Breast epithelium (tissue), 4 donors: ENCODE measurements at regions of chr12 and their contacts with region 1.

Region 1: DNA sequence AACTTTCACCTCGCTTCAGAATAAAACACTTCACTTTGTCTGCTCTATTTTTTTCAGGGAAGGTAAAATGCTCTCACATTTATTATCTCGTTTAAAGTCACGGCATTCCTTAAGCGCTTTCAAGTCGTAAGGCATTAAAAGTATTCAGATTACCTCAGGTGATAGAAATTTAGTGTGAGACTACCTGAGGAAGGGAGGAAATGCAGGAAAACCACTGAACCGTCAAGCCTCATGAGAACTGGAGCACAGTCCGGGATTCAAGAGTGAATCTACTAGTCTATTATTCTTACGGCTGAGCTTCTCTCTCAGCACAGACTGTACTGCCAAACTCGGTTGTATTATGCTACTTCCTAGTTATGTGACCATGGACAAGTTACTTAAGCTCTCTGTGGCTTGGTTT is 8.3 kb upstream of the PPFIBP1 start:
- DNase-seq: no peak
- H3K4me3 ChIP-seq: peak overlapping the region in 1 of 3 donors; percentile 14
- H3K27ac ChIP-seq: no peak overlapping the region
- H3K4me1 ChIP-seq: no peaks in the 10 kb centered on the region
- H3K27me3 ChIP-seq: no peaks in the 10 kb centered on the region
- CTCF ChIP-seq: no peak
- POLR2A ChIP-seq: no peak

Region 2: DNA sequence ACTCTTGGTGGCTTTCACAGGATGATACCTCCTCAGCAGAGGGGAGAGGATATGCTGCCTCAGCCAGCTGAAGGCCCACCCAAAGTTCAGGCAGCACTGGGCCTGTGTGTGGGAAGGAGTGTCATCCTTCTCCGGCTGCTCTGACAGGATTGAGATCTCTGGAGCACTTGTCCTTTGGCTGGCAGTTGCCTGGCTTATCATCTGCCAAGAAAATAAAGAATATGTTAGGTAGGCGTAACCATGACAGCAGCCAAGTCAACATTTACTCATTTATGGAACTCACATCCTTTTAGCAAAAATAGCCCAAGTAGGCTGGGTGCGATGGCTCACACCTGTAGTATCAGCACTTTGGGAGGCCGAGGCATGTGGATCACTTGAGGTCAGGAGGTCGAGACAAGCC is 76.9 kb after region 1 on chr12:
- intact Hi-C with region 1: loop called (anchors 2 kb)
- DNase-seq: peak in 1 of 2 donors; percentile 56
- H3K4me3 ChIP-seq: no peak overlapping the region
- H3K27ac ChIP-seq: peak overlapping the region; percentile 79 to 83
- H3K4me1 ChIP-seq: no peaks in the 10 kb centered on the region
- H3K27me3 ChIP-seq: no peaks in the 10 kb centered on the region
- CTCF ChIP-seq: no peak
- POLR2A ChIP-seq: no peak